ENCODE measurements at regions of chr11 and their contacts with region 1.

Region 1: GRCh38 chr11:8168485-8169257 is at the start of gene RIC3:
- DNase-seq: peak; percentile 80
- total RNA-seq, gene RIC3: 6.0 to 7.7 TPM

Region 2: DNA sequence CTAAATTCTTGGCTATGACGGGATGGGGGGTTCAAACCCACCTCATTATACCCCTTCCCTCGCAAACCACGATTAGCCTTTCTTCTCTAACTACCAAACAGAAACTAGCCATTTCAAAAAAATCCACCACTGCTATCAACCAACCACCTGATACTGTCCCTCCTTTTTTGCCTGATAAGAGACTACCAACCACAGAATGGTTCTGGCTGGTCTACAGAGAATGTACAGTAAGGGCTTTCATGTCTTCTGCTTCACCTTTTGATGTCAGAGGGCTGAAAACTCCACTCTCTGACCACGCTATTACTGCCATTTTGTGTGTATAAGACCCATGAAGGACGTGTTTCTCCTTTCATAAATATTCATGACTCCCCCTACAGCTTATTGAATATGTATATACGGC is 18.9 kb before region 1 on chr11:
- intact Hi-C with region 1: no loop called
- DNase-seq: no peak

Region 3: DNA sequence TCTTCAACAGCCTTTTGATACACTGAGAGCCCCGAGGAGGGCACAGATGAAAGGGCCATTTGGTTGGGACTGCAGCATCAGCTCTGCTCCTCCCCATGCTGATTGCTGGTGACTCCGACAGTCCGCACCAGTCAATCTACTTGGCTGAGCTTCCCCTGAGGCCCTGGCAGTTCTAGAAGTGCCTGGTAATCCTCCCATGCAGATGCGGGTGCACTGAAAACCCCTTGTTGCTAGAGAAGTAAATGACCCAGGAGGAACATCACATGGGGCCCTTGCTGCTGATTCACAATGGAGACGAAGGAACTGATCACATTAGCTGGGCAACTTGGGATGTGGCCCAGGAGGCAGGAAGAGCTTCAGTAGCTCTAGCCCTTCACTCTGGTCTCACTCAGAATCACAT is 35.4 kb after region 1 on chr11:
- intact Hi-C with region 1: loop called in 1 of 2 experiments (anchors 1 kb)
- DNase-seq: peak; percentile 60

Measured in posterior vena cava (tissue), 2 donors.